ENCODE measurements at regions of chr9 and their contacts with region 1.

Region 1: DNA sequence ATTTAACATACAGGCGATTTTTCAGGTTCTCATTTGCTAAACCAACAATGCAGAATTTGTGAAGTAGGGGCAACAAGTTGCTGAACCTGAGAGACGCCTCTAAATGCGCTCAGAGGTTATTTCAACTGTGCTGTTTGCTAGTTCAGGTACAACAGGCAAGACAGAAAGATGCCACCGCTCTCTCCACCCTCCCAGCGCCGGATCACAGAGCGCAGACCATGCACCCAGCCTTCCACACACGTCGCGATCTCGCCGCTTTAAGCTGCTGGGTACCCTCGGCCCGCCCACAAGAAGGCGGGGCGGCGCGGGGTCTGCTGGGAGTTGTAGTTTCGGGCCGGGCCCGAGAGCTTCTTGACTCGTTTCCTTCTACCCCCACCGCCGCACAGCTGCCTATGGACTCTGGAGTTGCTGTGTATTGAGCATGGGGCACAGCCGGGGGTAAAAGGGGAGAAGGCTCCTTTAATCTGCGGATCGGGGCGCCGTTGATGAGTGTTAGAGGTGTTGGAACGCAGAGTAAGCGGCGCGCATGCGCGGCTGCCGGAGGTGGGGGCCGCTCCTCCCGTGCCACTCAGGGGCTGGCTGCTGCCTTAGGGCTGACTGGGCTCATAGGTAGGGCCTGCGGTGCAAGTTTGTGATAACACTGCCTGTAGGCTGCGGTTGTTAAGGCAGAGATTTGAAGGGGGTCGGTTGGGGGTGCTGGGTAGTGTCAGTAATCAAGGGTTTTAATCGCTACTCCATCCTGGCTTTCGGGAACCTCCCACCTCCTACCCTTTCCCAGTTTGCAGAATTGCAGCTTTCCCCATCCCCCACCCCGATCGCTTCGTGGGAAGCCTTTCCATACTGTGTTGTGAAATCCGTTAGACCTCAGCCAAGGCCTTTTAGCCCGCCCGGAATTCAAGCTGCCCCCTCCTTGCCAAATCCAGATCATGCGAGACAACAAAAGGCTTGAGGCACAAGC is 40.3 kb upstream of the ABCA1 start:
- DNase-seq: peak; percentile 95
- ATAC-seq: peak; percentile 97

Region 2: GRCh38 chr9:105114964-105115728 is 146.8 kb after region 1 on chr9:
- intact Hi-C with region 1: no loop called
- DNase-seq: peak; percentile 53
- ATAC-seq: peak; percentile 79

Region 3: DNA sequence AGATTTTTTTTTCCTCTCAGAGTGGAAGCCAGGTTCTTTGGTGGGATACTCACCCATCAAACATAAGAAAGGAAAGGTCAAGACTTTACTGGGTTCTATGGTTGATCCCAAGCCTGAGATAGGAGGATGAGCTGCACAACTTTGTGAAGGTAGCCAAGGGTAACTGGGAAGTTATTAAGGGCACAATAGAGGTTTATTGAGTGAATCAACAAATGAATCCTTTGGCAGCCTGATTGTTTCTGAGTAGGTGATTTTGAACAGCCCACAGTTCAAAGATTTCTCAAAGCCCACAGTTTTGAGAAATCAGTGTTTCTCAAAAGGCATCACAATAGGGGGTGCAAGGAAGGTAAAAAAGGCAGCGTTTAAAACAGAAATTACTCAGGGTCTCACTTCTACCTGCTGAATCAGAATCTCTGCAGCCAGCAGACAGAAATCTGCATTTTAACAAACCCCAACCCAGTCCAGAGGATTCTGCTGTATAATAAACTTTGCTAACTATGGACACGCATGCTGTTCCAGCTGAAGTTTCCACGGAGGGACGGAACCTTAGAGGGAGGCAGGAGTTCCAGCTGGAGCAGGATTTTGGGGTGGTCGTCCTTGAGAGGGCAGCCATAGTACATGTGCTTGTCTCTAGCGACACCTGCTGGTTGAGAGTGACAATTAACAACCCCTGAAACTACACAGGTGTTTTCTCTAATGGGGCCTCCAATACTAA is 446.8 kb after region 1 on chr9:
- intact Hi-C with region 1: loop called (anchors 10 kb)
- DNase-seq: no peak
- ATAC-seq: peak; percentile 87